ENCODE measurements at regions of chr6 and their contacts with region 1.

Region 1: GRCh38 chr6:161418463-161418945 is 144.6 kb upstream of the AGPAT4 start:
- DNase-seq: peak in 3 of 9 experiments; percentile 20 to 62 (median 56)
- ATAC-seq: no peak
- H3K4me3 ChIP-seq: no peak overlapping the region
- H3K4me3 Mint-ChIP-seq: no peak overlapping the region
- H3K27ac ChIP-seq: no peak overlapping the region
- H3K27ac Mint-ChIP-seq: no peak overlapping the region
- H3K4me1 ChIP-seq: no peaks in the 10 kb centered on the region
- H3K4me1 Mint-ChIP-seq: no peaks in the 10 kb centered on the region
- H3K27me3 ChIP-seq: no peaks in the 10 kb centered on the region
- H3K27me3 Mint-ChIP-seq: peaks cover 15% of the 10 kb centered on the region
- CTCF ChIP-seq: peak; percentile 60

Region 2: DNA sequence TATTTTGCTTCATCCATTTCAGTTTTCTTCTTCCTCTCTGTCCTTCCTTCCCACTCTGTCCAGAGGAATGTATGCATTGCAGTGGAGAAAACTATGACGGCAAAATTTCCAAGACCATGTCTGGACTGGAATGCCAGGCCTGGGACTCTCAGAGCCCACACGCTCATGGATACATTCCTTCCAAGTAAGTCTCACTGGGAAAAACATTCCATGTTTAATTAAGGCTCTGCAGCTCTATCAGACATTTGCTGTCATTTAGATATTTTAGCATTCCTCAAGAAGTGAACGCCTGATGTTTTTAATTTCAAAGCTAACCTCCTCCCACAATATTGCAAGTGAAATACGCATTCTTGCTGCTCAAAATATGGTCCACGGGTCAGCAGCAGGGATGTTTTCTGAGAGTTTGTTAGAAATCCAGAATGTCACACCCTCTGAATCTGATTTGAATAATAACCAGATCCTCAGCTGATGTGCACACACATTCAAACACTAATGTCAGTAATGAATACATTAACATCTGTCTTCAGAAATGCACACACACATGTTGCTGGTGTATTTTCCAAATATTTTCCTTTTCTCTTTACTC is 703.7 kb before region 1 on chr6:
- CTCF ChIA-PET with region 1: no interaction called
- POLR2A ChIA-PET with region 1: no interaction called
- intact Hi-C with region 1: no loop called
- DNase-seq: no peak
- ATAC-seq: no peak
- H3K4me3 ChIP-seq: no peak overlapping the region
- H3K4me3 Mint-ChIP-seq: no peak overlapping the region
- H3K27ac ChIP-seq: no peak overlapping the region
- H3K27ac Mint-ChIP-seq: no peak overlapping the region
- H3K4me1 ChIP-seq: no peaks in the 10 kb centered on the region
- H3K4me1 Mint-ChIP-seq: no peaks in the 10 kb centered on the region
- H3K27me3 ChIP-seq: no peaks in the 10 kb centered on the region
- H3K27me3 Mint-ChIP-seq: peaks cover 5% of the 10 kb centered on the region
- CTCF ChIP-seq: no peak

Region 3: DNA sequence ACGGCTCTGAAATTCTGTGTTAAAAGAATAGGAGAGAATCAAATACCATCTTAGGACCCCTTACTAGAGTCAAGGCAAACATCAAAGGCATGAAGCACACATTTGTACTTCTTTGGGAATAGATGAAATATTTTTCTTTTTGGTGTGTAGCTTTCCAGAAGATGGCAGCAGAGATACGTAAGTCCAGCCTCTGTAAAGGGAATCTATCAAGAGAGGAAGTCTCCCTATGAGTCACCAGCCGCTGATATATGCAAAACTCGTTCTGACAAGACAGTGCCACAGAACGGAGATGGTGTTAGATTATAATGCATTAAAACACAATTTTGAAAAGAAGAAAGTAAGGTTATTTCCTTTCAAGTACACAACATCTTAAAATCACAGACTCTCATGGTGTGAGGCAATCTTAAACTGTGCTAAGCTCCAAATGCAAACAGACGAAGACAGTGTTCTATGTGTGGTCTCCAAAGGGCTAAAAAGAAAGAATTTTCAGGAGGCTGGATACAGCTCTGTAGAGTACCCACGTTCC is 24.6 kb before region 1 on chr6:
- CTCF ChIA-PET with region 1: interaction called, 15 read pairs
- POLR2A ChIA-PET with region 1: no interaction called
- intact Hi-C with region 1: no loop called
- DNase-seq: peak in 8 of 9 experiments; percentile 28 to 88 (median 52)
- ATAC-seq: peak; percentile 94
- H3K4me3 ChIP-seq: no peak overlapping the region
- H3K4me3 Mint-ChIP-seq: no peak overlapping the region
- H3K27ac ChIP-seq: no peak overlapping the region
- H3K27ac Mint-ChIP-seq: no peak overlapping the region
- H3K4me1 ChIP-seq: peaks cover 7% of the 10 kb centered on the region
- H3K4me1 Mint-ChIP-seq: no peaks in the 10 kb centered on the region
- H3K27me3 ChIP-seq: no peaks in the 10 kb centered on the region
- H3K27me3 Mint-ChIP-seq: peaks cover 3% of the 10 kb centered on the region
- CTCF ChIP-seq: peak; percentile 58

Region 4: DNA sequence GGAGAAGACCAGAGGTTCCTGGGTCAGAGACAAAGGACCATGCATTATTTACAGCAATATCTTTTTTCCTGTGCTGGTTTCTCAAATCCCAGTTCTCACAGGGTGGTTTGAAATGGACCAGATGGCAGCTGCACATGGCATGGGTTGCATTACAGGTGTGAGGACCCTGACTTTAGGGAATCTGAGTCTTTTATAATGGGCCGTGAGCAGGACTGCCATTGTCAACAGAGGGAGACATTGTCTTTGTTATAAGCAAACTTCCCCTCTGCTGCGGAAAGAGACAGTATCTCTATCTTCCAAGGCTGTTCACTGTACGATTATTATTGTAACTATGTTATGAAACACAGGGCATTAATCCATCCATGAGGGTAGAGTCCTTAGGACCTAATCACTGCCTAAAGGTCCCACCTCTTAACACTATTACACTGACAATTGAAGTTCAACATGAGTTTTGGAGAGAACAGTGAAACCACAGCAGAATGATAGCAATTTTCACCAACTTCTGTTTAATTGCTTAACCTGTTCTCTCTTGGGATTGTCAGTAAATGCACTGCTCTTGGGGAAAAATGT is 11.5 kb after region 1 on chr6:
- CTCF ChIA-PET with region 1: interaction called, 11 read pairs
- POLR2A ChIA-PET with region 1: no interaction called
- intact Hi-C with region 1: no loop called
- DNase-seq: no peak
- ATAC-seq: no peak
- H3K4me3 ChIP-seq: no peak overlapping the region
- H3K4me3 Mint-ChIP-seq: no peak overlapping the region
- H3K27ac ChIP-seq: no peak overlapping the region
- H3K27ac Mint-ChIP-seq: no peak overlapping the region
- H3K4me1 ChIP-seq: no peaks in the 10 kb centered on the region
- H3K4me1 Mint-ChIP-seq: no peaks in the 10 kb centered on the region
- H3K27me3 ChIP-seq: no peaks in the 10 kb centered on the region
- H3K27me3 Mint-ChIP-seq: no peaks in the 10 kb centered on the region
- CTCF ChIP-seq: no peak

Region 5: DNA sequence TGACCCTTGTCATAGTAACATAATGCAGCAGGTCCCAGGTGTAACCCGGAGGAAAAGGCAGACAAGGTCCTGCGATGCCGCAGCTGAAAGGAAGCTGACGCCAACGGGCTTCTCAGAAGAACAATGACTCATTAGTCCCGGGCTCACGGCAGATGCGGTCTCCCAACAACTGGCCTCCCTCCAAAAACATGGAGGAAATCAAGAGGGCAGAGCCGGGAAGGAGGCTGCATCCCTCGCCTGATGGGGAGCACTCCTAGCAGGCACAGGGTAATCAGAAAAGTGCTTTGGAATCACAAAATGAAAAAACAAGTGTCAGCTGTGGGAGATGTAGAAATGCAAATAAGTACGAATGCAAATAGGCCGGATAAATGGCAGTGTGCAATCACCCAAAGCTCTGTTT is 20.6 kb after region 1 on chr6:
- CTCF ChIA-PET with region 1: interaction called, 10 read pairs
- POLR2A ChIA-PET with region 1: no interaction called
- intact Hi-C with region 1: no loop called
- DNase-seq: no peak
- ATAC-seq: no peak
- H3K4me3 ChIP-seq: no peak overlapping the region
- H3K4me3 Mint-ChIP-seq: no peak overlapping the region
- H3K27ac ChIP-seq: no peak overlapping the region
- H3K27ac Mint-ChIP-seq: no peak overlapping the region
- H3K4me1 ChIP-seq: no peaks in the 10 kb centered on the region
- H3K4me1 Mint-ChIP-seq: no peaks in the 10 kb centered on the region
- H3K27me3 ChIP-seq: no peaks in the 10 kb centered on the region
- H3K27me3 Mint-ChIP-seq: no peaks in the 10 kb centered on the region
- CTCF ChIP-seq: no peak

Measured in CD8-positive, alpha-beta T cell (primary cell).